GM10248 (cell line): ENCODE measurements at regions of chr1 and their contacts with region 1.

Region 1: DNA sequence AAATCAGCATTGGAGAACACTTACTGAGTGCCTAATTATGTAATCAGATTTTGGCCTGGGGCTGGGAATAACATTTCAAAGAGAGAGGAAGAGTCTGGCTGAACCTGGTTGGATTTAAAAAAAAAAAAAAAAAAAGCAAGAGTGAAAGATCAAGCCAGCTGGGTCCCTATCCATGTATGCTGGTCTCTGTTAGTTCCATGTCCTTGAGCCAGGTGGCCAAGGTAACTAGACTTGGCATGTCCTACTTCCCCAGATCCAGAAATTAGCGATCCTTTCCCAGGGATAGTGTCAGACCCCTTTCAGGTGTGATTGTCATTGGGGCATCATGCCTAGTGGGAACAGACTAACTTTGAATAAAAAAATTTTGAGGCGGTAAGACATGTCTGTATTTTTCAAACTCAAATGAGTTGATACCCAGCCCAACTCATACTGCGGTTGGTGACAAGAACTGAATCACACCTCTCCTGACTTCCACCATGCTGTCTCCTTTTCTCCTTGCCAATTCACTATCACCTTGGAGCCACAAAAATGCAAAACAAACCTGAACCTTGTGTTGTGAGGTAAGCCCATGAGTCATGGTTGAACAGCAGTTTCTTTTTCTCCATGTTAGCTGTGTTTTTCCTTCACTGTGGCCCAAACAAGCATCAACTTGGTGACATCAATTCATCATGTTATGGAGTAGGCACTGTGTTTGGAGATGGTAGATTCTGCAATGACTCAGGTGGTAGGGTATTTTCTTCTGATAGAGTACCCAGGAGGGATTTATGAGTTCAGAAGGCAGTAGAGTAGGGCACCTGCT is 24.5 kb upstream of the PPP2R5A start:
- DNase-seq: no peak
- CTCF ChIP-seq: no peak

Region 2: DNA sequence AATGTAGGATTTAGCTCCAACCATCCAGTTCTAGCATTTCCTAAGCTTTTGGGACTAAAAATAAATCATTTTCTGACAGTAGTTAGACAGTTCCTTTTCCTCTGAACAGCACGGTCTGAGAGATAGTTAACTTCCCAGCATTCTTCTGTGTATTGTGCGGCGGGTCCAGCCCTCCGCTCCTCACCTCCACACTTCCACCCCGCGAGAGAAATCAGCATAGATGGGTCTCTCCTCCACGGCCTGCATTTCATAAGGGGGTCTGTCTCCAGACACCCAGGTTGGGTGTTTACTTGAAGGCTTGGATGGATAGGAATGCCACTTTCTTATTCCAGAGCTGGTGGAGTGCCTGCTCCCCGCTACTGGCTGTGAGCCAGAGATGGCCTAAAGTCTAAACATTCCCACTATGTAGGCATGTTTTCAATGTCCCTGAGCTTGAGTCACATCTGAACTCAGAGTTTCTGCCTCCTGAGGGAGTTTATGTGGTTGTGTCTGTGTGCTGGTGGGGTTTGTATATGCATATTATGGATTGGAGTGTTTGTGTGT is 13.5 kb before region 1 on chr1:
- CTCF ChIA-PET with region 1: interaction called, 10 read pairs
- POLR2A ChIA-PET with region 1: no interaction called
- DNase-seq: no peak
- CTCF ChIP-seq: no peak

Region 3: GRCh38 chr1:212738330-212738729 is 477.6 kb after region 1 on chr1:
- CTCF ChIA-PET with region 1: no interaction called
- POLR2A ChIA-PET with region 1: no interaction called
- DNase-seq: no peak
- CTCF ChIP-seq: no peak